CD8-positive, alpha-beta T cell (primary cell): ENCODE measurements at regions of chr1 and their contacts with region 1.

Region 1: DNA sequence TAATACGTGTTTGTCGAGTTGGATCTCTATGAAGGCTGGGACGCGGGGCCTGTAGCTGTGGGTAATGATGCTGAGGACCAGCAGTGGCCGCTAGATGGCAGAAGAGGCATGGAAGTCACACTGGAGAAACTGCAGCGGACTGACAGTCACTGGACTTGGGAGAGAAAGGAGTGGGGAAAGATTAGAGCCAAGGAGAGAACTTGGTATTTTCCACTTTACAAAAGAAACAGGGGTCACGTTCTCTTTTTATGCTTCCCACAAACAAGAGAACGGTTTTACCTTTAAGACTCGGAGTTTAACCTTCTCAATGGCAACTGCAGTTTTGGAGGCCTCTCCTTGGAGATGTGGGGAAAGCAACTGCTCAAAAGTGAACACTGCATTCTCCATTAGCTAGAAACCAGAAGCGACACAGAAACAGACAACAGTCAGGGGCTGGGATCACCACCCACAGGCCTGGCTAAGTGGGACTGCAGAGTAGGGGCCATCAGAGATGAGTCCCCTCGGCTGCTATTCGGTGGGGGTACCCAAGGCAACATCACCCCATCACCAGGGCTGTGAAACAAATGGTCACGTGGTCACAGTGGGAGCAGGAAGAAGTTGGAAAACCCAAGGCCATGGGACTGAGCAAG is 51.1 kb upstream of the EDEM3 start:
- DNase-seq: peak; percentile 71 to 90 (median 85)
- ATAC-seq: peak; percentile 92
- H3K4me3 ChIP-seq: no peak overlapping the region
- H3K4me3 Mint-ChIP-seq: no peak overlapping the region
- H3K27ac ChIP-seq: no peak overlapping the region
- H3K27ac Mint-ChIP-seq: no peak overlapping the region
- H3K4me1 ChIP-seq: no peaks in the 10 kb centered on the region
- H3K4me1 Mint-ChIP-seq: peaks cover 6% of the 10 kb centered on the region
- H3K27me3 ChIP-seq: no peaks in the 10 kb centered on the region
- H3K27me3 Mint-ChIP-seq: no peaks in the 10 kb centered on the region
- CTCF ChIP-seq: peak; percentile 92

Region 2: DNA sequence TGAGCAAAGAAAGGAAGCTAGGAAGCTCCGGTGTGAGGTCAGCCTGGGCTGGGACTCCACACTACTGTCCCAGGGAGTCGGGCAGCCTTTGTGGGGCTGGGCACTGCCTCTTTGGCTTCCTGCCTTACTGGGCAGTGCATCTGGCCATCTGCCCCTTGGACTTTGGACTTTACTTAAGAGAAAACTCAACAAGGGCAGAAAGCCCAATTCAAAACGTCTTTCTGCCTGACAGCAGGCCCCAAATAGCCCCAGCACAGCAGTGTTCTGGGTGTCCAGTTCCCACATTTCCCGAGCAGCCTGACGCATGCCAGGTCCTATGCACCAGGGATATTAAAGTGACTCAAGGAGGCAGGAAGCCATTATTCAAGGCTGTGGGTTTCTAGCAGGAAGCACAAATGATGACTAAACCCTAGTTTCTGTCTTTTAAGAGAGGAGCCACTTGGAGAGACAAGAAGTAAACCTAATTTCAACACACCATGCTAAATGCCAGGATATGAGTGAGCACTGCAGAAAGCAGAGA is 13.3 kb before region 1 on chr1:
- CTCF ChIA-PET with region 1: interaction called, 50 read pairs
- POLR2A ChIA-PET with region 1: interaction called, 4 read pairs
- intact Hi-C with region 1: no loop called
- DNase-seq: peak in 1 of 9 experiments; percentile 24
- ATAC-seq: no peak
- H3K4me3 ChIP-seq: no peak overlapping the region
- H3K4me3 Mint-ChIP-seq: no peak overlapping the region
- H3K27ac ChIP-seq: no peak overlapping the region
- H3K27ac Mint-ChIP-seq: no peak overlapping the region
- H3K4me1 ChIP-seq: no peaks in the 10 kb centered on the region
- H3K4me1 Mint-ChIP-seq: peaks cover 2% of the 10 kb centered on the region
- H3K27me3 ChIP-seq: no peaks in the 10 kb centered on the region
- H3K27me3 Mint-ChIP-seq: no peaks in the 10 kb centered on the region
- CTCF ChIP-seq: no peak

Region 3: GRCh38 chr1:184973272-184974055 is 167.7 kb after region 1 on chr1:
- CTCF ChIA-PET with region 1: interaction called, 200 read pairs
- POLR2A ChIA-PET with region 1: no interaction called
- intact Hi-C with region 1: no loop called
- DNase-seq: peak in 8 of 9 experiments; percentile 2 to 89 (median 34)
- ATAC-seq: peak; percentile 48
- H3K4me3 ChIP-seq: peak overlapping the region; percentile 65 to 93
- H3K4me3 Mint-ChIP-seq: peak overlapping the region; percentile 96
- H3K27ac ChIP-seq: peak overlapping the region; percentile 52 to 82
- H3K27ac Mint-ChIP-seq: peak overlapping the region; percentile 89
- H3K4me1 ChIP-seq: peaks cover 14% of the 10 kb centered on the region
- H3K4me1 Mint-ChIP-seq: peaks cover 51% of the 10 kb centered on the region
- H3K27me3 ChIP-seq: no peaks in the 10 kb centered on the region
- H3K27me3 Mint-ChIP-seq: peaks cover 26% of the 10 kb centered on the region
- CTCF ChIP-seq: no peak

Region 4: DNA sequence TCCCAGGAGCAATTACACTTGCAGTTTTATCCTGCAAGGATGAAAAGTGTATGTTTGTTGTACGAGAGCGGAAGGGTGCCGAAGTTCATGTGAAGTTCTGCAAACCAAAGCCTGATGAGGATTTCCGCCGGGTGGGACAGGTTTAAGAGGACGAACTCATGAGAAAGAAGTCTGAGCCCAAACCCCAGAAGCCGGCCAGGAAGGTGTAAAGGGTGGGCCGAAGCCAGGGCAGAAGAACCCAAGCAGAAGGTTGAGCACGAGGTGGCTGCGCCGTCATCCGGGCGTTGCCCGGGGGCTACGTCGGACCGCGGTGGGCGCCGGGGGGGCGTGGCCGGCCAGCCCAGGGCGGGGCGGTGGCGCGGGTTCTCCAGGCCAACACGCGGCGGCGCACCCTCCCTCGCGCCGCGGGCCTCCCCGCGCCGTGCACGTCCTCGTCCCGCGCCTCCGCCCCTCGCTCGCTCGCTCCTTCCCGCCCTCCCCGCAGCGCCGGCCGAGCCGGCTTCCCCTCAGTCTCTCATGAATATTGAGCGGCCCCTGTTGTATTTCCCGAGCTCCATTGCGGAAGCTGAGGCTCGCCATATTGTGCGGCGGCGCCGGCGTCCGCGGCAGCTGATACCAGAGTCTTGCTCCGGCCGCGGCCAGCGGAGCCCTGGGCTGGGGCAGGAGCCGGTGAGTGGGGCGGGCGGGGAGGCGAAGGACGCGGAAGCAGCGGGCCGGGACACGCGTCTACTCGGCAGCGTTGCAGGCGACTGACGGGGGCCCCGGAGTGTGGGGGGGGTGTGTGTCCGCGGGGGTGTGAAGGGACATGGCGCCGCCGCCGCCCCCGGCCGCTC is 239.4 kb after region 1 on chr1 and contains the start of gene RNF2:
- CTCF ChIA-PET with region 1: interaction called, 3 read pairs
- POLR2A ChIA-PET with region 1: no interaction called
- intact Hi-C with region 1: loop called in 1 of 2 experiments (anchors 10 kb)
- DNase-seq: peak; percentile 61 to 95 (median 84)
- ATAC-seq: peak; percentile 91
- H3K4me3 ChIP-seq: peak within 1 kb of the TSS; percentile 74 to 85
- H3K4me3 Mint-ChIP-seq: peak within 1 kb of the TSS; percentile 92
- H3K27ac ChIP-seq: peak within 1 kb of the TSS; percentile 62 to 81
- H3K27ac Mint-ChIP-seq: peak within 1 kb of the TSS; percentile 93
- H3K4me1 ChIP-seq: peaks cover 23% of the 10 kb centered on the region
- H3K4me1 Mint-ChIP-seq: peaks cover 46% of the 10 kb centered on the region
- H3K27me3 ChIP-seq: no peaks in the 10 kb centered on the region
- H3K27me3 Mint-ChIP-seq: no peaks in the 10 kb centered on the region
- CTCF ChIP-seq: no peak
- total RNA-seq, gene RNF2: 13.3 to 13.6 TPM

Region 5: DNA sequence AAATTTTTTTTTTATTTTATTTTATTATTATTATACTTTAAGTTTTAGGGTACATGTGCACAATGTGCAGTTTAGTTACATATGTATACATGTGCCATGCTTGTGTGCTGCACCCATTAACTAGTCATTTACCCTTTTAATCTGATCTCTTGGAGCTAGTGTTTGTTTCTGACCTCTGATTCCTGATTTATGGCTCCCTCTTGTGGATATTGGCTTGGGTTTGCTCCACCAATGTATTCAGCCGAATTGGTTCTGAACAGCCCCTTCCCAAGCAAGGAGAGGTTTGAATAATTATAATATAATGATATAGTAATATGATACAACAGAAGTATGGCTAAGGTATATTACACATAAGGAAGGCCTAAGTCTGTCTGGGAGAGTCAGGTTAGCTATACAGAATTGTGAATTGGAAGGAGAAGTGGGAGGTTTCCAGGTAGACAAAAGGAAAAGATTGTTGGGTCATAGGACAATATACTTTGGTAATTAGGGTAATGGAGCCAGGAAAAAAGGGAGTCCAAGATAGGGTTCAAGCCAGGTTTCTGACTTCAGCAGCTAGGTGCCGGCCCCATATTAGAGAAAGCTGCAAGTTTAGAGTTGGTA is 875.4 kb after region 1 on chr1:
- CTCF ChIA-PET with region 1: interaction called, 5 read pairs
- POLR2A ChIA-PET with region 1: no interaction called
- intact Hi-C with region 1: loop called in 1 of 2 experiments (anchors 5 kb)
- DNase-seq: peak in 4 of 9 experiments; percentile 15 to 67 (median 40)
- ATAC-seq: peak; percentile 51
- H3K4me3 ChIP-seq: no peak overlapping the region
- H3K4me3 Mint-ChIP-seq: no peak overlapping the region
- H3K27ac ChIP-seq: no peak overlapping the region
- H3K27ac Mint-ChIP-seq: no peak overlapping the region
- H3K4me1 ChIP-seq: peaks cover 10% of the 10 kb centered on the region
- H3K4me1 Mint-ChIP-seq: peaks cover 26% of the 10 kb centered on the region
- H3K27me3 ChIP-seq: no peaks in the 10 kb centered on the region
- H3K27me3 Mint-ChIP-seq: no peaks in the 10 kb centered on the region
- CTCF ChIP-seq: peak; percentile 30

Region 6: GRCh38 chr1:186212544-186213226 is 1406.9 kb after region 1 on chr1:
- CTCF ChIA-PET with region 1: no interaction called
- POLR2A ChIA-PET with region 1: no interaction called
- intact Hi-C with region 1: loop called in 1 of 2 experiments (anchors 5 kb)
- DNase-seq: peak in 3 of 9 experiments; percentile 9 to 57 (median 39)
- ATAC-seq: no peak
- H3K4me3 ChIP-seq: no peak overlapping the region
- H3K4me3 Mint-ChIP-seq: no peak overlapping the region
- H3K27ac ChIP-seq: no peak overlapping the region
- H3K27ac Mint-ChIP-seq: no peak overlapping the region
- H3K4me1 ChIP-seq: no peaks in the 10 kb centered on the region
- H3K4me1 Mint-ChIP-seq: no peaks in the 10 kb centered on the region
- H3K27me3 ChIP-seq: peaks cover 0 to 4% of the 10 kb centered on the region in 2 experiments
- H3K27me3 Mint-ChIP-seq: peaks cover 45% of the 10 kb centered on the region
- CTCF ChIP-seq: no peak